Activated CD8-positive, alpha-beta T cell treated with anti-CD3 and anti-CD28 coated beads, Interleukin-2, amount 10 ng/mL, durations not matched to agents 7 days and 5 days (primary cell): ENCODE measurements at regions of chr12 and their contacts with region 1.

Region 1: GRCh38 chr12:76621582-76622024 is 62.0 kb upstream of the OSBPL8 start:
- DNase-seq: peak; percentile 74
- ATAC-seq: peak; percentile 64
- H3K4me3 Mint-ChIP-seq: no peak overlapping the region
- H3K27ac Mint-ChIP-seq: no peak overlapping the region
- H3K4me1 Mint-ChIP-seq: peaks cover 2% of the 10 kb centered on the region
- H3K27me3 Mint-ChIP-seq: no peaks in the 10 kb centered on the region

Region 2: GRCh38 chr12:76636121-76636692 is 14.6 kb after region 1 on chr12:
- CTCF ChIA-PET with region 1: interaction called, 17 read pairs
- POLR2A ChIA-PET with region 1: no interaction called
- DNase-seq: no peak
- ATAC-seq: no peak
- H3K4me3 Mint-ChIP-seq: no peak overlapping the region
- H3K27ac Mint-ChIP-seq: no peak overlapping the region
- H3K4me1 Mint-ChIP-seq: peaks cover 7% of the 10 kb centered on the region
- H3K27me3 Mint-ChIP-seq: no peaks in the 10 kb centered on the region